Left ventricle myocardium superior (tissue), 1 donor: ENCODE measurements at regions of chr4 and their contacts with region 1.

Region 1: GRCh38 chr4:128863312-128864075 is 54.0 kb downstream of the JADE1 start:
- DNase-seq: peak; percentile 71
- ATAC-seq: peak; percentile 62

Region 2: GRCh38 chr4:128427832-128428366 is 435.6 kb before region 1 on chr4:
- intact Hi-C with region 1: loop called (anchors 10 kb)
- DNase-seq: no peak
- ATAC-seq: peak; percentile 81

Region 3: GRCh38 chr4:128558896-128559679 is 304.4 kb before region 1 on chr4:
- intact Hi-C with region 1: loop called (anchors 10 kb)
- DNase-seq: no peak
- ATAC-seq: no peak

Region 4: GRCh38 chr4:128782076-128782715 is 81.3 kb before region 1 on chr4:
- intact Hi-C with region 1: loop called (anchors 5 kb)
- DNase-seq: peak; percentile 57
- ATAC-seq: peak; percentile 72